ENCODE measurements at regions of chr12 and their contacts with region 1.

Region 1: GRCh38 chr12:10721651-10722501 is 1.2 kb downstream of the YBX3 start:
- DNase-seq: peak; percentile 49
- H3K4me3 Mint-ChIP-seq: peak overlapping the region; percentile 94
- H3K27ac Mint-ChIP-seq: peak overlapping the region; percentile 96
- H3K4me1 Mint-ChIP-seq: peaks cover 45% of the 10 kb centered on the region
- H3K27me3 Mint-ChIP-seq: peaks cover 24% of the 10 kb centered on the region

Region 2: GRCh38 chr12:10212201-10213131 is 509.4 kb before region 1 on chr12 and contains the start of gene GABARAPL1:
- intact Hi-C with region 1: loop called (anchors 2 kb)
- DNase-seq: peak; percentile 81
- H3K4me3 Mint-ChIP-seq: peak within 1 kb of the TSS; percentile 91
- H3K27ac Mint-ChIP-seq: peak within 1 kb of the TSS; percentile 93
- H3K4me1 Mint-ChIP-seq: peaks cover 30% of the 10 kb centered on the region
- H3K27me3 Mint-ChIP-seq: peaks cover 21% of the 10 kb centered on the region
- total RNA-seq, gene GABARAPL1: 4.0 and 5.2 TPM in 2 replicates

Region 3: DNA sequence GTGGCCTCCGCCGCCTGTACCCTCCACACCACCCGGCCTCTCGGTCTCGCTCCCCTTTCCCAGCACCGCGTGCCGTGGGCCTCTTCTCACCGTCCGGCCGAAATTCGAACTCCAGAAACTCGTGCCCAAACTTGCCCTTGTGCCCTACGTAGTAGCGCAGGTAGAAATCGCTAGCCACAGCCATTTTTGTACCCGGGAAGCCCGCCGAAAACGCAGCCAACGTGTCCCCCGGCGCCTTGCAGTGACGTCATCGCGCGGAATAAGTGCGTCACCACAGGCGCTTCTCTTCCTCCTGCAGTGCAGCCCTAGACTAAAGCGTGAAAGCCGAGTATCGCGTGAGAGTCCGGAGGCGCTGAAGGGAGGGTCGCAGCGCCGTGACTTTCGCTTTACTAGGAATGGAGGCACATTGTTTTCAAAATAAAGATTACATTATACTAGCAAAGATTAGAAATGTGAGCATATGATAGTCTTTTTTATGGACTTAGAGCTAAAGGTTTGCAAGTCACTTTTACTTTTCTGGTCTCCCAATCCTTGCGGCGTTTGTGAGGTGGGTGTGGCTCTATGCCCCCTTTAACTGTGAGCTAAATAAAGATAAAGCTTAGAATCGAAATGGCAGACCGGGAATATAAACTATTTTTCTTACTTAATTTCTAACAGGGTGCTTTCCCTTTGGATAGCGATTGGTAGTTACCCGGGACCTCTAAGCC is 108.4 kb before region 1 on chr12 and contains the start of gene MAGOHB:
- intact Hi-C with region 1: loop called (anchors 1 kb)
- DNase-seq: peak; percentile 97
- H3K4me3 Mint-ChIP-seq: peak within 1 kb of the TSS; percentile 100
- H3K27ac Mint-ChIP-seq: peak within 1 kb of the TSS; percentile 100
- H3K4me1 Mint-ChIP-seq: peaks cover 27% of the 10 kb centered on the region
- H3K27me3 Mint-ChIP-seq: peaks cover 11% of the 10 kb centered on the region
- total RNA-seq, gene MAGOHB: 69.4 and 70.2 TPM in 2 replicates

Region 4: DNA sequence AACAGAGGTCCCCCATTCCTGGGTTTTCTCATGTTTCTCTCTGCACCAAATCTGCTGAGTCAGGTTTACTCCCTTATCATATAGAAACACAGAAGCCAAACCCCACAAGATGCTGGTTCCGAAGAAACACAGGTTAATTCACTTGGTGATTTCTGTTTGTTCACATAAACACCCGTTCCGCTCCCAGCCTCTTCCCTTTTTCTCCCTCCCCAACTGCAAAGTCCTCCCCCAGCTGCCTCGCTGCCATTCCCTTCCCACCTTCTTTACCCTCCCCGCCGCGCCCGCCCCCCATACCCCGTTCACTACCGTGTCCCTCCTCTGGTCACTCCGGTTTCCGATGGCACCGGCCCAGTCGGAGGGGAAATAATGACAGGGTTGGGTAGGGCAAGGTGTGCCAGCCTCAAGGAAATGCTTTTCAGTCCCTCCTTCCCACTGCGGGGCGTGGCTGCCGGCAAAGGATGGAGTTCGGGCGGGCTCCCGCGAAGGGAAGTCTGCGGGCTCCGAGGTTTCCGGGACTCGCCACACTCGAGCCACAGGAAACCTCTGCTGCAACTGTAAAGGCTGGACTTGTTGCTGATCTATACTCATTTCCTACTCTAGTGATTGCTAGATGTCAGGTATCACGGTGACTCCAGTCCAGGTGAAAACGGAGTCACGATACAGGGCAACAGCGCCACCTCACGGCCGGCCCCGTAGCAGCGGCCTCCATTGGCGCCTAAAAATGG is 48.1 kb before region 1 on chr12 and contains the start of gene STYK1:
- intact Hi-C with region 1: loop called (anchors 1 kb)
- DNase-seq: peak; percentile 71
- H3K4me3 Mint-ChIP-seq: peak within 1 kb of the TSS; percentile 70
- H3K27ac Mint-ChIP-seq: no peak within 1 kb of the TSS
- H3K4me1 Mint-ChIP-seq: peaks cover 39% of the 10 kb centered on the region
- H3K27me3 Mint-ChIP-seq: peaks cover 67% of the 10 kb centered on the region
- total RNA-seq, gene STYK1: not detected in 2 replicates

Region 5: GRCh38 chr12:10701131-10701681 is 20.7 kb before region 1 on chr12:
- intact Hi-C with region 1: loop called (anchors 1 kb)
- DNase-seq: no peak
- H3K4me3 Mint-ChIP-seq: no peak overlapping the region
- H3K27ac Mint-ChIP-seq: peak overlapping the region; percentile 47
- H3K4me1 Mint-ChIP-seq: peaks cover 22% of the 10 kb centered on the region
- H3K27me3 Mint-ChIP-seq: no peaks in the 10 kb centered on the region

Region 6: DNA sequence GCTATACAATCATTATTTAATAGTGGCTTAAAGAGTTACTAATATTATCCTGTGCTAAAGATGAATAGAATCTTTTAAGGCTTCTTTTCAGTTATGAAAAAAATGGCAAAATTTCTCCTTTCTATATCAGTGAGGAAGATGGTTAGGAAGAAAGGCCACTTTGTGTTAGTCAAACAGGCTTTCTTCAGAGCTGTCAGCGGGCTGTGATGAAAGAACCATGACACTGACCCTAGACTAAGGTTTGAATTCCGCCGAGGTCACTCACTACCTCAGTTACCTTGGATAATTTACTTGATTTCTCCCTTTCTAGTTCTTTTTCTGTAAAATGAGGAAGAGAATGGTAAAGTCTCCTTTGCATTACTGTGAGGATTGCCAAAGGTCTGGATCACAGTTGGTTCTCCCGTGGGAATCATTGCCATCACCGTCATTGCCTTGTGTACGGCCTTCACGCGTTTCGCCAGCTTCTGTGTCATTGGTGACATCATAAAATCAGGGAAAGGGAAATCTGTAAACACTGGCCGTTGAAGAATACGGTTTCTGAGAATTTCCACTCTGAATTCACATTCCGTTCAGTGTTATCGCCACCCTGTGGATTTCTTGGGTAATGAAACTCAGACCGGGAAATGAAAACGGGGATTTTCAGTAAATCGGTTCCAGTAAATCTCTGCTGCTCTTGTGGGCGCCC is 28.0 kb after region 1 on chr12:
- intact Hi-C with region 1: loop called (anchors 2 kb)
- DNase-seq: peak; percentile 60
- H3K4me3 Mint-ChIP-seq: peak overlapping the region; percentile 38
- H3K27ac Mint-ChIP-seq: no peak overlapping the region
- H3K4me1 Mint-ChIP-seq: peaks cover 10% of the 10 kb centered on the region
- H3K27me3 Mint-ChIP-seq: peaks cover 43% of the 10 kb centered on the region

Region 7: GRCh38 chr12:11171145-11171968 is 449.5 kb after region 1 on chr12 and contains the start of gene SMIM10L1:
- intact Hi-C with region 1: loop called (anchors 1 kb)
- DNase-seq: peak; percentile 83
- H3K4me3 Mint-ChIP-seq: peak within 1 kb of the TSS; percentile 99
- H3K27ac Mint-ChIP-seq: peak within 1 kb of the TSS; percentile 99
- H3K4me1 Mint-ChIP-seq: peaks cover 53% of the 10 kb centered on the region
- H3K27me3 Mint-ChIP-seq: no peaks in the 10 kb centered on the region
- total RNA-seq, gene SMIM10L1: 10.7 and 10.8 TPM in 2 replicates